OCI-LY7 (cell line): ENCODE measurements at regions of chr10 and their contacts with region 1.

Region 1: GRCh38 chr10:84205049-84205852 is 10.9 kb downstream of the CDHR1 start:
- DNase-seq: peak; percentile 67
- H3K4me3 ChIP-seq: no peak overlapping the region
- H3K27ac ChIP-seq: no peak overlapping the region
- H3K4me1 ChIP-seq: no peaks in the 10 kb centered on the region
- CTCF ChIP-seq: peak; percentile 91

Region 2: GRCh38 chr10:84135836-84136235 is 69.4 kb before region 1 on chr10:
- CTCF ChIA-PET with region 1: no interaction called
- POLR2A ChIA-PET with region 1: no interaction called
- intact Hi-C with region 1: no loop called
- DNase-seq: no peak
- H3K4me3 ChIP-seq: no peak overlapping the region
- H3K27ac ChIP-seq: no peak overlapping the region
- H3K4me1 ChIP-seq: peaks cover 11% of the 10 kb centered on the region
- CTCF ChIP-seq: no peak

Region 3: GRCh38 chr10:84152769-84153168 is 52.5 kb before region 1 on chr10:
- CTCF ChIA-PET with region 1: interaction called, 3 read pairs
- POLR2A ChIA-PET with region 1: interaction called, 6 read pairs
- intact Hi-C with region 1: loop called (anchors 1 kb)
- DNase-seq: no peak
- H3K4me3 ChIP-seq: no peak overlapping the region
- H3K27ac ChIP-seq: no peak overlapping the region
- H3K4me1 ChIP-seq: no peaks in the 10 kb centered on the region
- CTCF ChIP-seq: no peak

Region 4: DNA sequence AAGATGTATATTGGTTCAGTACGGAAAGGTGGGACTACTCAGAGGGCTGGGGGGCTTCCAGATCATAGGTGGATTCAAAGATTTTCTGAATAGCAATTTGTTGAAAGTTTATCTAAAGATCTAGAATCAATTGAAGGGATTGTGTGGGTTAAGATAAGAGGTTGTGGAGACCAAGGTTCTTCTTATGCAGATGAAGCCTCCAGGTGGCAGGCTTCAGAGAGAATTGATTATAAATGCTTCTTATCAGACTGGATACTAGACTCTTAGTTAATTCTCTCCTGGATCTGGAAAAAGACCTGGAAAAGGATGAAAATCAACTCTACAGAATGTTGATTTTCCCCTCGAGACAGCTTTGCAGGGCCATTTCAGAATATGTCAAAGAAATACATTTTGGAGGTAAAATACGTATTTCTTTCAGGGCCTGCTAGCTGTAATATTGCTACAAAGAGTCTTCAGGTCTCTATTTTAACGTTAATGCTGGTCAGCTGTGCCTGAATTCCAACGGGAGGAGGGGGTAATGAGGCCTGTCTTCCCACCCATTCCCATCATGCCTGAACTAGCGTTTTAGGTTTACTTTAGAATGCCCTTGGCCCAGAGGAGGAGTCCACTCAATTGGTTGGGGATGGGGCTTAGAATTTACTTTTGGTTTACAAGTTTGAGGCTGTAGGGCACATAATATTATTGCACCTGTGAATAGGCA is 44.4 kb before region 1 on chr10:
- CTCF ChIA-PET with region 1: no interaction called
- POLR2A ChIA-PET with region 1: no interaction called
- intact Hi-C with region 1: loop called (anchors 2 kb)
- DNase-seq: no peak
- H3K4me3 ChIP-seq: no peak overlapping the region
- H3K27ac ChIP-seq: no peak overlapping the region
- H3K4me1 ChIP-seq: peaks cover 20% of the 10 kb centered on the region
- CTCF ChIP-seq: peak; percentile 39; the same call in 1 of the 2 replicates